ENCODE measurements at regions of chr5 and their contacts with region 1.

Region 1: DNA sequence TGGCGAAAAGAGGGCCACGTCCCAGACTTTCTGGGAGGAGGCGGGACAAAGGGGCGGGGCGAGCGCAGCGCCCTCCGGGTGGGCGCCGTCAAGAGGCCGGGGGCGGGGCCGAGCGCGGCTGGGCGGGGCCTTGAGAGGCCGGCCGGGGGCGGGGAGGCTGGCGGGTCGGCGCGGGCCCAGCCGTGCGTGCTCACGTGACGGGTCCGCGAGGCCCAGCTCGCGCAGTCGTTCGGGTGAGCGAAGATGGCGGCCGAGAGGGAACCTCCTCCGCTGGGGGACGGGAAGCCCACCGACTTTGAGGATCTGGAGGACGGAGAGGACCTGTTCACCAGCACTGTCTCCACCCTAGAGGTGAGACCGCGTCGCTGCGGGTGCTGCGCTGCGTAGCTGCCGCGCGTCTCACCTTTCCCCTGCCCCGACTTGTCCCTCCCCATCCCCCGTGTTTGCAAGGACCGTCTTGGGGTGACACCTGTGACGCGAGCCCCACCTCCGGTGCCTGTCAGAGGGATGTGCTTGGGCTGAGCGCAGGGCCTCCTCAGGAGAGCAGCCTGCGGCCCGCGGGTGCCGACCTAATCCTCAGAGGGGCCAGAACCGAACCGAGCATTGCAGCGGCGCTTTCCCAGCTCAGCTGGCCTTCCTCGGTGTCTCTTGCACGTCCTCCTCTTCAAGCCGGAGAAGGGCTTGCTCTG is at the start of gene SNX2:
- DNase-seq: peak; percentile 95
- ATAC-seq: peak; percentile 91
- H3K4me3 Mint-ChIP-seq: peak within 1 kb of the TSS; percentile 93
- H3K27ac Mint-ChIP-seq: peak within 1 kb of the TSS; percentile 91
- H3K4me1 Mint-ChIP-seq: peaks cover 17% of the 10 kb centered on the region
- H3K27me3 Mint-ChIP-seq: peaks cover 10% of the 10 kb centered on the region
- total RNA-seq, gene SNX2: 42.9 to 43.0 TPM

Region 2: DNA sequence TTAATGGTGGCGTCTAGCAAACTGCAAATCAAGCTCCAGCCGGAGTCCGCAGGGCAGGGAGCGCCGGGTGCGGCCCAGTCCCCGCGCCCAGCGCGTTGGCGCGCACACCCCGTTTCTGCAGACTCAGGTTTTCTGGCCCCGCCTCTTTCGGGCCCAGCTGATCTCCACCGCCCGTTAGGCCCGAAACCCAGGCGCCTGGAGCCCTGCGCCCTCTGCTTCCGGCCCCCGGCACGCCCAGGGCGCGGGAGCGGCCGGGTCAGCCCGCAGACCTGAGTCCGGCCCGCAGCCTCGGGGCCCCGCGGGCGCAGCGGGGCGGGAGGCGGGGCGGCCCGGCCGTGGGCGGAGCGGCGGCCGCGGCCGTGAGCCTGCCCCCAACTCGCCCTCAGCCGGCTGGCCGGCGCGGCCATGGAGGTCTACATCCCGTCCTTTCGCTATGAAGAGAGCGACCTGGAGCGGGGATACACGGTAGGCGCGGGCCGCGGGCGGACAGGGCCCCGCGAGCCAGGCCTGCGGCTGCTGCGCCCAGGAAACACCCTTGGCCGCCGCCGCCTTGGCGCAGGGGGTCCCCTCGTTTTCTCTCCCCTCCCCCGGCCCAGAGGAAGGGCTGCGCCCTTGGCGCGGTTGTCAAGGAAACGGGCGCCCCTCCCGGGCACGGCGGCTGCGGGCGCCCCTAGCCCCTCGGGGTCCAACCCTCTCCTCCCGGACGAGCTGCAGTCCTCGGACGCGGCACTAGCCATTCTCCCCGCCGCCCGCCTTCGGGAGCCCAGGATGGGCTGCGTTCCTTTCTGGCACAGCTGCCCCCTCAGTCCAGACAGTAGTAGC is 70.4 kb after region 1 on chr5 and contains the start of gene SNX24:
- POLR2A ChIA-PET with region 1: interaction called, 16 read pairs
- DNase-seq: peak; percentile 77
- ATAC-seq: peak; percentile 87
- H3K4me3 Mint-ChIP-seq: peak within 1 kb of the TSS; percentile 85
- H3K27ac Mint-ChIP-seq: peak within 1 kb of the TSS; percentile 14
- H3K4me1 Mint-ChIP-seq: peaks cover 2% of the 10 kb centered on the region
- H3K27me3 Mint-ChIP-seq: peaks cover 31% of the 10 kb centered on the region
- total RNA-seq, gene SNX24: 3.2 to 3.4 TPM